ENCODE measurements at regions of chr1 and their contacts with region 1.

Region 1: DNA sequence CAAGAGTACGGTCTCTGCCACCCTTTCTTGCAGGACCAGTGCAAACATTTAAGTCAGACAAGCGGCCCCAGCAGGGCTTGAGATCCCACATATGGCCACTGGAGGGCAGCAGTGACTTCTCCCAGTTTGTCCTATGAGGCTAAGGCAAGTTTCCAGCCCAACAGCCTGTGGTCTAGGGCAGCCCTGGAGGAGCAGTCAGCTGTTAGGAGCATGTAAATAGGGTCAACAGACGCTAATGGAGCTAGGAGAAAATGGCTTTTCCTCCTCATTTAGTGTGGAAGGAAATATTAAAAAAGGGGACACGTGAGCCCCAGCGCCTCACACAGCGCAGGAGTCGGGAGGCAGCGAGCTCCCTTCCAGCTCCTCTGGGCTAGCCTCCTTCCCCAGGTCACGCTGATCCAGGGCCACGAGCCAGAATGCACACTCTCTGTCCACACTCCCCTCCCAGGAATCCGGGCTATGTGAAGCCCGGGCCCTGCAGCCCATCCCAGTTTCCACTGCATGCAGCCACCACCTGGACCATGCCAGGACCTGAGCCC is 95.6 kb downstream of the LAMC2 start:
- DNase-seq: peak; percentile 88 to 89
- H3K4me3 ChIP-seq: no peak overlapping the region
- H3K4me3 Mint-ChIP-seq: peak overlapping the region; percentile 49
- H3K27ac Mint-ChIP-seq: peak overlapping the region; percentile 88
- H3K4me1 ChIP-seq: peaks cover 48% of the 10 kb centered on the region
- H3K4me1 Mint-ChIP-seq: peaks cover 31% of the 10 kb centered on the region
- H3K27me3 ChIP-seq: no peaks in the 10 kb centered on the region
- H3K27me3 Mint-ChIP-seq: no peaks in the 10 kb centered on the region
- CTCF ChIP-seq: peak; percentile 80 to 88

Region 2: GRCh38 chr1:182962554-182963115 is 319.0 kb before region 1 on chr1:
- CTCF ChIA-PET with region 1: interaction called, 10 read pairs
- POLR2A ChIA-PET with region 1: no interaction called
- intact Hi-C with region 1: loop called (anchors 1 kb)
- DNase-seq: peak; percentile 78 to 81
- H3K4me3 ChIP-seq: peak overlapping the region; percentile 21; the same call in 1 of the 2 replicates
- H3K4me3 Mint-ChIP-seq: peak overlapping the region; percentile 55
- H3K27ac Mint-ChIP-seq: peak overlapping the region; percentile 58
- H3K4me1 ChIP-seq: peaks cover 36% of the 10 kb centered on the region
- H3K4me1 Mint-ChIP-seq: peaks cover 14% of the 10 kb centered on the region
- H3K27me3 ChIP-seq: no peaks in the 10 kb centered on the region
- H3K27me3 Mint-ChIP-seq: no peaks in the 10 kb centered on the region
- CTCF ChIP-seq: peak; percentile 90 to 93

Region 3: GRCh38 chr1:182968151-182968765 is 313.4 kb before region 1 on chr1:
- CTCF ChIA-PET with region 1: no interaction called
- POLR2A ChIA-PET with region 1: no interaction called
- intact Hi-C with region 1: loop called (anchors 2 kb)
- DNase-seq: peak; percentile 41 to 53
- H3K4me3 ChIP-seq: no peak overlapping the region
- H3K4me3 Mint-ChIP-seq: peak overlapping the region; percentile 52
- H3K27ac Mint-ChIP-seq: peak overlapping the region; percentile 92
- H3K4me1 ChIP-seq: peaks cover 84% of the 10 kb centered on the region
- H3K4me1 Mint-ChIP-seq: peaks cover 21% of the 10 kb centered on the region
- H3K27me3 ChIP-seq: no peaks in the 10 kb centered on the region
- H3K27me3 Mint-ChIP-seq: no peaks in the 10 kb centered on the region
- CTCF ChIP-seq: no peak

Region 4: DNA sequence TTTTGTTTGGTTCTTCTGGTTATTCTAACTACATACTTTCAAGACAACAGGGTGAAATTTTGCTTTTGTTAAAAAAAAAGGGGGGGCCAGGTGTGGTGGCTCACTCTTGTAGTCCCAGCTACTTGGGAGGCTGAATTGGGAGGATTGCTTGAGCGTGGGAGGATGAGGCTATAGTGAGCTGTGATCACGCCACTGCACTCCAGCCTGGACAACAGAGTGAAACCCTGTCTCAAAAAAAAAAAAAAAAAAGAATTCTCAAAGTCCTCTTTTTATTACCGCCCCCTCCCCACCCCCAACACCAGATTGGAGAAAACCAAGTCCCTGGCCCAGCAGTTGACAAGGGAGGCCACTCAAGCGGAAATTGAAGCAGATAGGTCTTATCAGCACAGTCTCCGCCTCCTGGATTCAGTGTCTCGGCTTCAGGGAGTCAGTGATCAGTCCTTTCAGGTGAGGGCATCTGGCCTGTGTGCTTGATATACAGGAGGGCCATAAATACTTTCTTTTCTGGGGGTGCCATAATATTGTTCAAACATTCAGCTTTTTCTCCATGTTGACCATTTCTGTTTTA is 45.4 kb before region 1 on chr1:
- CTCF ChIA-PET with region 1: interaction called, 3 read pairs
- POLR2A ChIA-PET with region 1: no interaction called
- intact Hi-C with region 1: loop called (anchors 2 kb)
- DNase-seq: peak; percentile 81 to 96
- H3K4me3 ChIP-seq: no peak overlapping the region
- H3K4me3 Mint-ChIP-seq: no peak overlapping the region
- H3K27ac Mint-ChIP-seq: no peak overlapping the region
- H3K4me1 ChIP-seq: peaks cover 42% of the 10 kb centered on the region
- H3K4me1 Mint-ChIP-seq: peaks cover 23% of the 10 kb centered on the region
- H3K27me3 ChIP-seq: no peaks in the 10 kb centered on the region
- H3K27me3 Mint-ChIP-seq: no peaks in the 10 kb centered on the region
- CTCF ChIP-seq: no peak

Region 5: GRCh38 chr1:183306317-183307042 is 24.9 kb after region 1 on chr1:
- CTCF ChIA-PET with region 1: no interaction called
- POLR2A ChIA-PET with region 1: no interaction called
- intact Hi-C with region 1: no loop called
- DNase-seq: no peak
- H3K4me3 ChIP-seq: no peak overlapping the region
- H3K4me3 Mint-ChIP-seq: no peak overlapping the region
- H3K27ac Mint-ChIP-seq: no peak overlapping the region
- H3K4me1 ChIP-seq: peaks cover 6% of the 10 kb centered on the region
- H3K4me1 Mint-ChIP-seq: peaks cover 26% of the 10 kb centered on the region
- H3K27me3 ChIP-seq: no peaks in the 10 kb centered on the region
- H3K27me3 Mint-ChIP-seq: no peaks in the 10 kb centered on the region
- CTCF ChIP-seq: peak; percentile 20 to 64

Region 6: GRCh38 chr1:183318433-183318832 is 36.8 kb after region 1 on chr1:
- CTCF ChIA-PET with region 1: interaction called, 11 read pairs
- POLR2A ChIA-PET with region 1: no interaction called
- intact Hi-C with region 1: loop called (anchors 1 kb)
- DNase-seq: peak; percentile 57 to 67
- H3K4me3 ChIP-seq: no peak overlapping the region
- H3K4me3 Mint-ChIP-seq: no peak overlapping the region
- H3K27ac Mint-ChIP-seq: no peak overlapping the region
- H3K4me1 ChIP-seq: 0 out of 2 replicates have a peak, but pooled peaks cover 7% of the 10 kb centered on the region
- H3K4me1 Mint-ChIP-seq: peaks cover under 1% of the 10 kb centered on the region
- H3K27me3 ChIP-seq: no peaks in the 10 kb centered on the region
- H3K27me3 Mint-ChIP-seq: no peaks in the 10 kb centered on the region
- CTCF ChIP-seq: peak; percentile 51 to 66

Region 7: GRCh38 chr1:183543619-183544204 is 262.1 kb after region 1 on chr1:
- CTCF ChIA-PET with region 1: no interaction called
- POLR2A ChIA-PET with region 1: no interaction called
- intact Hi-C with region 1: loop called (anchors 1 kb)
- DNase-seq: peak in 1 of 2 experiments; percentile 62
- H3K4me3 ChIP-seq: no peak overlapping the region
- H3K4me3 Mint-ChIP-seq: no peak overlapping the region
- H3K27ac Mint-ChIP-seq: no peak overlapping the region
- H3K4me1 ChIP-seq: peaks cover 6% of the 10 kb centered on the region; the same call in 1 of the 2 replicates
- H3K4me1 Mint-ChIP-seq: peaks cover 13% of the 10 kb centered on the region
- H3K27me3 ChIP-seq: no peaks in the 10 kb centered on the region
- H3K27me3 Mint-ChIP-seq: no peaks in the 10 kb centered on the region
- CTCF ChIP-seq: peak; percentile 57 to 80

Region 8: GRCh38 chr1:183622884-183623785 is 341.5 kb after region 1 on chr1:
- CTCF ChIA-PET with region 1: no interaction called
- POLR2A ChIA-PET with region 1: no interaction called
- intact Hi-C with region 1: loop called (anchors 1 kb)
- DNase-seq: peak; percentile 65 to 70
- H3K4me3 ChIP-seq: no peak overlapping the region
- H3K4me3 Mint-ChIP-seq: no peak overlapping the region
- H3K27ac Mint-ChIP-seq: no peak overlapping the region
- H3K4me1 ChIP-seq: peaks cover 19% of the 10 kb centered on the region
- H3K4me1 Mint-ChIP-seq: peaks cover 9% of the 10 kb centered on the region
- H3K27me3 ChIP-seq: no peaks in the 10 kb centered on the region
- H3K27me3 Mint-ChIP-seq: no peaks in the 10 kb centered on the region
- CTCF ChIP-seq: peak; percentile 71 to 78